ENCODE measurements at regions of chr10 and their contacts with region 1.

Region 1: DNA sequence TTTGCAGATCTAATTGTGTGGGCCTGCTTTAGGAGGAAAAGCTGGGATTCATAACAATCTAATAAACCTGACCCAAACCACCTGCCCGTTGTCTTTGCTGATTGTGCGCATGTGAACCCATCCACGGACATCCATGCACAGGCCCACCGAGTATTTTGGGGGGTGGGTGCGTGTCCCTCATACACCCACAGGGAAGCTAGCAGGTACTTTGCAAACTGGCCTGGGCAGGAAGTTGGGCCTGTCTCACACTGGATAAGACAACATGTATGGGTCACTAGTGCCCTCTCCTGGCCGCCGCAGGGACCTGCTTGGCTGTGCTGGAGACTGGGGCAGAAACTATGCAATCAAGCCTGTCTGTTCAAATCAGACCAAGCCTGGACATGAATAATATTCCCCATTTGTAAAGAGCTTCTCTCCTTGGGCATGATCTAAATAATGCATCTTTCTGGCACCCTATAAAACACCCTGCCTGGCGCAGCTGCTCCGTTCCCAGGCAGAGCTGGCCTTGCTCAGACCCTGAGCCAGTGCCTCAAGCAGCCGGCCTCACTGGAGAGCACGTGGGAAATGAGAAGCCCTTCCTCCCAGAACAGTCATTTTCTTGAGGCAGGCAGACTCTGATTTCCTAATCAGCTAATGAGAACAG is 15.8 kb downstream of the ECHDC3 start:
- DNase-seq: peak; percentile 91
- ATAC-seq: peak; percentile 100
- H3K4me3 Mint-ChIP-seq: no peak overlapping the region
- H3K27ac Mint-ChIP-seq: peak overlapping the region; percentile 78
- H3K4me1 Mint-ChIP-seq: peaks cover 7% of the 10 kb centered on the region
- H3K27me3 Mint-ChIP-seq: no peaks in the 10 kb centered on the region

Region 2: GRCh38 chr10:11505639-11506038 is 252.3 kb before region 1 on chr10:
- CTCF ChIA-PET with region 1: interaction called, 15 read pairs
- POLR2A ChIA-PET with region 1: no interaction called
- DNase-seq: no peak
- ATAC-seq: no peak
- H3K4me3 Mint-ChIP-seq: no peak overlapping the region
- H3K27ac Mint-ChIP-seq: no peak overlapping the region
- H3K4me1 Mint-ChIP-seq: peaks cover under 1% of the 10 kb centered on the region
- H3K27me3 Mint-ChIP-seq: peaks cover 2% of the 10 kb centered on the region

Region 3: DNA sequence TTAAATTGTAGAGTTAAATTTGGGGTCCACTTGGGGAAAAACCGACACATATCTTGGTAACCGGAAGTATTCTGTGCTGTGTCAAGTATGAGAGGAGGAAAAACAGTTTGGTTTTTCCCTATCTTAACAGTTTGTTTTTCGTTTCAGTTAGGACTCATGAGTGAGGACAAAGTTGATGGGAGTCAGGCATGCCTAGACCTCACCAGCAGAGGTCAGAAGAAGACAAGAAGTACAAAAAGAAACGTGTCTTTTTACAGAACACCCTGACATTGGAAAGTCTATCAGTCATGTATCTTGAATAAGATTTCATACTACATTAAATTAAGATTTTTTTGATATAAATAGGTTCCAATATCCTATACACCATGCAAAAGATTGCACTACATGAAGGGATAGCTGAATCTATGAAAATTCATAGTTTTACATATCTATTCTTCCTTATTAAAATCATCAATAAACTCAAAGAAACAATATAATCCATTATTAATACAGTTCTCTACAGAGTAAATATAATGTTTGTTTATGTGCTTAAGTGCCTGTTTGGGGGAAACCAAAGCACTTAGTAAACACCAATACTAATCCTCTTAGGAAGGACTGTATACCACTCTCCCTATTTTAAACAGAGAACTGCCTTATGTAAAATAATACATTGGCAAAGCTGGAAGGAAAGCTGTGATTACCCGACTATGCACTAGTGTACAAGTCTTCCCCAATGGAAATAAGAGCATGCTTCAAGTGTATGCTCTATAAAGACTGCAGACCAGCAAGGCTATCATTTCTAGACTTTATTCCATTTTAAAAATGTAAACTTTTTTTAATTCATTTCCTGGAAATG is 242.1 kb before region 1 on chr10:
- CTCF ChIA-PET with region 1: interaction called, 118 read pairs
- POLR2A ChIA-PET with region 1: interaction called, 9 read pairs
- DNase-seq: peak; percentile 69
- ATAC-seq: peak; percentile 77
- H3K4me3 Mint-ChIP-seq: no peak overlapping the region
- H3K27ac Mint-ChIP-seq: no peak overlapping the region
- H3K4me1 Mint-ChIP-seq: peaks cover 17% of the 10 kb centered on the region
- H3K27me3 Mint-ChIP-seq: peaks cover 10% of the 10 kb centered on the region

Region 4: DNA sequence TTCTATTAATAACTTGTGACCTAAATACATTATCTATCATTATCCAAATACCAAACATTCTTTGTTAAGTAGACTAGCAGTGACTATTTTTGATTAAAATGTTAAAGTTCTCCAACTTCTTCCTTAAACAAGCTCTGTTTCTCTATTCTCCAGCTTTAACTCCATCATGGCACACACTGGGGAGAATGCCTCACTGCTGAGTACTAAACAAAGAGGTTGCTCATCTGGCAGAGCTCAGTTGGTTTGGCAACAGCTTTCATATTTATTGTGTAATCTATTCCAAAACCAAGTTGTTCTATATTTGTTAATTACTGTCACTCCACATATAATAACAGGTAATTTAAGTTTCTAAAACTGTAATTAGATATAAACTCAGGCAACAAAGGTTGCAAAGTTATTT is 236.1 kb before region 1 on chr10:
- CTCF ChIA-PET with region 1: interaction called, 23 read pairs
- POLR2A ChIA-PET with region 1: no interaction called
- DNase-seq: no peak
- ATAC-seq: no peak
- H3K4me3 Mint-ChIP-seq: no peak overlapping the region
- H3K27ac Mint-ChIP-seq: no peak overlapping the region
- H3K4me1 Mint-ChIP-seq: peaks cover 7% of the 10 kb centered on the region
- H3K27me3 Mint-ChIP-seq: no peaks in the 10 kb centered on the region

Region 5: DNA sequence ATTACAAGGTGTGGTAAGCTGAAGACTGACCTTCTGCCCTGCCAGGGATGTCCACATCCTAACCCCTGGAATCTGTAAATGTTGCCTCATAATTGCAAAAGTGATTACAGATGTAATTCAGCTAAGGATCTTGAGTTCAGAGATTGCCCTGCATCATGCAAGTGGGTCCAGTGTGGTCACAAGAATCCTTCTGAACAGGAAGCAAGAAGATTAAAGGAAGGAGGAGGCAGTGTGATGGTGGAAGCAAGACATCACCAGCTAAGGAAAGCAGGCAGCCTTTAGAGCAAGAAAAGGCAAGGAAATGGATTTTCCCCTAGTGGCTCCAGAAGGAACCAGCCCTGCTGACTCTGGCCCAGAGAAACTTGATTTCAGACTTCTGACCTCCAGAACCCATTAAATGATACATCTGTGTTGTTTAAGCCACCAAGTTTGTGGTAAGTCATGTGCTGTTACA is 224.6 kb before region 1 on chr10:
- CTCF ChIA-PET with region 1: interaction called, 13 read pairs
- POLR2A ChIA-PET with region 1: no interaction called
- DNase-seq: no peak
- ATAC-seq: no peak
- H3K4me3 Mint-ChIP-seq: no peak overlapping the region
- H3K27ac Mint-ChIP-seq: no peak overlapping the region
- H3K4me1 Mint-ChIP-seq: peaks cover 18% of the 10 kb centered on the region
- H3K27me3 Mint-ChIP-seq: peaks cover 3% of the 10 kb centered on the region

Region 6: DNA sequence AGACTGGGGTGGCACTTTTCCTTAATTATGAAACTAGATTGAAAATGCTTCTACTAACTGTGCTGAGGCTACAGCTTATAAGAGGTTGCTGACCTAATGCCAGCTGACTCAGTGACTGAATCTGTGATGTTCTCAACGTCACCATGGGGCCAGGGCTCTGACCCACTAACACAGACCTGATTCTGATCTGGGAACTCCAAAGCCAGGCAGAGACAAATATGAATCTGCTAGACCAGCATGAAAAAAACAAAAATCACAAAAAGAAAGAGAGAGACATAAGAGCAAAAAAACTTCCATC is 162.6 kb before region 1 on chr10:
- CTCF ChIA-PET with region 1: no interaction called
- POLR2A ChIA-PET with region 1: no interaction called
- DNase-seq: no peak
- ATAC-seq: no peak
- H3K4me3 Mint-ChIP-seq: no peak overlapping the region
- H3K27ac Mint-ChIP-seq: no peak overlapping the region
- H3K4me1 Mint-ChIP-seq: no peaks in the 10 kb centered on the region
- H3K27me3 Mint-ChIP-seq: peaks cover 11% of the 10 kb centered on the region

Measured in activated CD8-positive, alpha-beta T cell treated with anti-CD3 and anti-CD28 coated beads, Interleukin-2, amount 10 ng/mL, durations not matched to agents 7 days and 5 days (primary cell).